ENCODE measurements at regions of chr9 and their contacts with region 1.

Region 1: DNA sequence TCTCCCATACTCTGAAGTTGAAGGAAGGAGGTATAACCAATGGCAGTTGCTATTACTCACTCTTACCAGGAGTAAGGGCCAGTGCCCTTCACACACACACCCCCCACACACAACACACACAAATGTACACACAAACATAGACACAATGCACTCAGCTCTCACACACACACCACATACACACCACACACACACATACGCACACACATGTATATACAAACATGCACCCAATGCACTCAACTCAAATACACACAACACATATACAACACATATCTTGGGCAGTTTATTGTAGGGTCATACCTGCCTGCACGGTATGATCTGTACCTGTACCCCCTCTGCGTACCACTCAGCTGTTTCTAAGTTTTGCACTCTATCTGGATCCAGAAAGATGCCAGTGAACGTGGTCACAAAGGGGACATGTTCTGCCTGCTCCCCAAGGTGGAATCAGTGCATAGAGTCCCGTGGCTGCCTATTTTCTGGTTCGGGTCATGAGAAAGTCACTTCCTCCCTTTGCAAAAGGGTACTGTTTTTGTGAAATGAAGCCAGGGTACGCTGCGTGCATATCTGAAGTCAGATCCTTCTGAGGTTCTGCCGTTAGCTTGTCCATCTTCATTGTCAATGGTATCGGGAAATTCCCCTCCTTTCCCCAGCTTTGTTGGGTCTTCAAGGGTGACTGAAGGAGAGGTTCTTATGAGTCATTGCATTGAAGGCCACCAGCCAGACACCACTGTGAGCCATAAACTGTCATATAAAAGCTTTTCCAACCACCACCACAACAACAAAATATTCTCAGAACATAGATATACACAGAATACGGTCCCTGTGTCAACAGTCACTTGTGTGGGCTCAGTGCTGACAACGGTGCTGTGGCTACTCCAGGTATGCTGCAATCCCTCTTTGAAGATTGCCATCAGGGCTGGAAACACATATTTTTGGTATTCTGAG is 131.9 kb downstream of the UGCG start:
- DNase-seq: peak; percentile 68
- H3K4me3 Mint-ChIP-seq: no peak overlapping the region
- H3K27ac Mint-ChIP-seq: peak overlapping the region; percentile 36
- H3K4me1 Mint-ChIP-seq: peaks cover 38% of the 10 kb centered on the region
- H3K27me3 Mint-ChIP-seq: peaks cover 15% of the 10 kb centered on the region

Region 2: GRCh38 chr9:111937781-111938426 is 90.6 kb before region 1 on chr9:
- intact Hi-C with region 1: loop called (anchors 2 kb)
- DNase-seq: peak; percentile 84
- H3K4me3 Mint-ChIP-seq: peak overlapping the region; percentile 45
- H3K27ac Mint-ChIP-seq: peak overlapping the region; percentile 83
- H3K4me1 Mint-ChIP-seq: peaks cover 22% of the 10 kb centered on the region
- H3K27me3 Mint-ChIP-seq: peaks cover 2% of the 10 kb centered on the region

Region 3: DNA sequence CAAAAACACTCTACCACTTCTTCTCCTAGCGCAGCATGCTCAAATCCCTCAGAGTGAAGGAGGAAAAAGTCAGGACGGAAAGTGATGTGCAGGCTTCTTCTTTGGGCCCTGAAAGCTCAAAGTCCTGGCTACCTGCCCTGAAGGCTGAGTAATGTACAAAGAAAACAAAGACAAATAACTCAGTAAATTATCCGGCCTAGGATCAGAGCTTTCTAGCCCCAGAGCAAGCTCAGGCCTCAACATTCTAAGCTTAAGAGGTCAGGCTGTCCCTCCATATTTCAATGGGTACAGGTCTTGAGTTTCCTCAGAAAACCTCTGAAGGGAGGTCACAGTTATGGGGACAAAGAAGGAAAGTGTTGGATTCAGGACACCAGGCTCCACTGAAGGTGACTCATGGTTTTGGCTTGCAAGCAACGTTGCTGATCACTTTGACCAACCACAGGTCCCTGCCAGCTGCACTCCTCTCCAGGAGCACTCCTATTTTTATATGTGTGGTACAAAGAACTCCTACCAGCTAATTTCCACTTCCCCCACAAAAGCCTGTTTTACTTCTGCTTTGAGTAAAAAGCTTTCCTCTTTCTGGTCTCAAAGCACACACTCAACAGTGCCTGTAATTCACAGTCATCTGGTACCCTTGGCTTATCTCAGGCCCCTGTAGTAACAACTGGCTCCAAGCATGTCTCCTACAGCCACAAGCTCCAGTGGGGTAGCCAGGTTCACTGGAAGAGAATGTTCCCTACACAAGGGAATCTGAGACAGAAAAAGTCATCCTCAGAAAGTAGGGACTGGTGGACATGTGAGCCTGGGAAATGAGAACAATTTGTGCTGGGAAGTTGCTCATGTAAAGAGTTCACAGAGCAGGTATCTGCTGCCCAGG is 16.3 kb before region 1 on chr9:
- intact Hi-C with region 1: loop called (anchors 1 kb)
- DNase-seq: no peak
- H3K4me3 Mint-ChIP-seq: peak overlapping the region; percentile 15
- H3K27ac Mint-ChIP-seq: peak overlapping the region; percentile 64
- H3K4me1 Mint-ChIP-seq: peaks cover 20% of the 10 kb centered on the region
- H3K27me3 Mint-ChIP-seq: peaks cover 36% of the 10 kb centered on the region

Region 4: GRCh38 chr9:112061152-112061740 is 32.7 kb after region 1 on chr9:
- intact Hi-C with region 1: loop called (anchors 1 kb)
- DNase-seq: peak; percentile 82
- H3K4me3 Mint-ChIP-seq: no peak overlapping the region
- H3K27ac Mint-ChIP-seq: peak overlapping the region; percentile 48
- H3K4me1 Mint-ChIP-seq: peaks cover 22% of the 10 kb centered on the region
- H3K27me3 Mint-ChIP-seq: no peaks in the 10 kb centered on the region

Region 5: DNA sequence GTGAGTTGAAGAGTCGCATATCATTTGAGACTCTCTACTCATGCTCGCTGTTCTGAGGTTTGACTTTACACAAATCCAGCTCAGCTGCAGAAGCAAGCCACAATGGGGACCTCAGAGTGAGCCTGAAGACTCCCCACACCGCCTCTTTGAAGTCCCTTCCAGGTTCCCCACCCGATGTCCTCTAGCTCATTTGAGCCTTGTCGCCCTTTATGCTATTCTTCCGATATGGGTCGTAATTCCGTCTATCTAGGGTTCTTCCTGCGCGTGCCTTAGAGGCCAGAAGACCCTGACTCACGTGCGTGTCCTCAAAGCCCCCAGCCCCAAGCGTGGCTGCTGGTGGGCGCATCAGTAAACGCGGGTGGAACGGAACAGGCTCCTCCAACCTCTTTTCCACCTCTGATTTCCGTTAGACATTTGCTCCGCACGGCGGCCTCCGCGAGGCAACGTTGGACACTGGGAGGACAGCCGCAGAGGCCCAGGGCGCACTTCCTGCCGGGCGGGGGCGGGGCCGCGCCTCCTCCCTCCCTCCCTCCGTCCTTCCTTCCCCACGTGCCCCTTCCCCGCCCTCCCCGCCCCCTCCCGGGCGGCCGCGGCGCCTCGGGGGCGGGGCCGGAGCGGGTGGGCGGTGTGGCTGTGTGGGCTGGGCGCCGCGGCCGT is 721.7 kb after region 1 on chr9 and contains the start of gene SNX30:
- intact Hi-C with region 1: loop called (anchors 2 kb)
- DNase-seq: peak; percentile 95
- H3K4me3 Mint-ChIP-seq: peak within 1 kb of the TSS; percentile 82
- H3K27ac Mint-ChIP-seq: peak within 1 kb of the TSS; percentile 86
- H3K4me1 Mint-ChIP-seq: peaks cover 51% of the 10 kb centered on the region
- H3K27me3 Mint-ChIP-seq: peaks cover 4% of the 10 kb centered on the region
- total RNA-seq, gene SNX30: 2.6 and 2.9 TPM in 2 replicates

Measured in activated CD4-positive, alpha-beta T cell treated with anti-CD3 and anti-CD28 coated beads, Interleukin-2, amount 10 ng/mL, durations not matched to agents 24 days and 14 days (primary cell).